ENCODE measurements at regions of chr1 and their contacts with region 1.

Region 1: GRCh38 chr1:167669209-167670124 is 39.4 kb downstream of the RCSD1 start:
- DNase-seq: no peak
- CTCF ChIP-seq: no peak

Region 2: GRCh38 chr1:167681451-167682098 is 12.1 kb after region 1 on chr1:
- CTCF ChIA-PET with region 1: interaction called, 32 read pairs
- POLR2A ChIA-PET with region 1: no interaction called
- DNase-seq: no peak
- CTCF ChIP-seq: no peak